ENCODE measurements at regions of chr6 and their contacts with region 1.

Region 1: DNA sequence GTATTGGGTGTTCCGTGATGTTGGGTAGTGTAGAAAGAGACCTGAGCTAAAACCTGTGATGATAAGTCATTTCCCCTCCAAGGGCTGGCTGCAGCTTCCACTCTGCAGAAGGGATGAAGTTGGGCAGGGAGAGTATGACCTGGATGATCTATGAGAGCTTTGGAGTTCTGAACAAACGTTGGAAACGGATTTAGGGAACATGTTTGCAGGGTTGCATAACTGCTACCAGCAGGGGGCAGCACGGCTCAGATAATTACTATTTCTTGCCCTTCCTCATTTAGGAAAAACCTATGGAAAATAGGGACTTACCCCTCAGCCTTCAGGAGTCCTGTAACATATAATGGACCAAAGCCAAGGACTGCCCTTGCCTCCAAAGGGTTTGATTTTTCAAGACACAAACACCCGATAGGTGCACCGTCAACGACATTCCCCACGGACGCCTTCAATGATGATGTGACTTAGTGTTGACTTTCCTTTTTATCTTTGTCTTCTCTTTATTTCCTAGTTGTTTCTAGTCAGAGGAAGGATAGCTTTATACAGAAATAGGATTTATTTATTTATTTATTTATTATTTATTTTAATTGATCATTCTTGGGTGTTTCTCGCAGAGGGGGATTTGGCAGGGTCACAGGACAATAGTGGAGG is 164.9 kb upstream of the SASH1 start:
- DNase-seq: peak; percentile 72
- H3K4me3 ChIP-seq: no peak overlapping the region
- H3K27ac ChIP-seq: no peak overlapping the region
- H3K4me1 ChIP-seq: peaks cover 5% of the 10 kb centered on the region
- H3K27me3 ChIP-seq: no peaks in the 10 kb centered on the region
- CTCF ChIP-seq: peak; percentile 70 to 82
- POLR2A ChIP-seq: no peak

Region 2: GRCh38 chr6:147382945-147383554 is 794.7 kb before region 1 on chr6:
- CTCF ChIA-PET with region 1: interaction called, 14 read pairs
- POLR2A ChIA-PET with region 1: no interaction called
- dilution Hi-C with region 1: no loop called
- intact Hi-C with region 1: no loop called
- DNase-seq: peak; percentile 44
- H3K4me3 ChIP-seq: no peak overlapping the region
- H3K27ac ChIP-seq: no peak overlapping the region
- H3K4me1 ChIP-seq: no peaks in the 10 kb centered on the region
- H3K27me3 ChIP-seq: no peaks in the 10 kb centered on the region
- CTCF ChIP-seq: peak; percentile 24 to 33
- POLR2A ChIP-seq: no peak

Region 3: GRCh38 chr6:147859071-147859470 is 318.6 kb before region 1 on chr6:
- CTCF ChIA-PET with region 1: no interaction called
- POLR2A ChIA-PET with region 1: no interaction called
- dilution Hi-C with region 1: no loop called
- intact Hi-C with region 1: no loop called
- DNase-seq: no peak
- H3K4me3 ChIP-seq: no peak overlapping the region
- H3K27ac ChIP-seq: no peak overlapping the region
- H3K4me1 ChIP-seq: no peaks in the 10 kb centered on the region
- H3K27me3 ChIP-seq: no peaks in the 10 kb centered on the region
- CTCF ChIP-seq: no peak
- POLR2A ChIP-seq: no peak

Region 4: DNA sequence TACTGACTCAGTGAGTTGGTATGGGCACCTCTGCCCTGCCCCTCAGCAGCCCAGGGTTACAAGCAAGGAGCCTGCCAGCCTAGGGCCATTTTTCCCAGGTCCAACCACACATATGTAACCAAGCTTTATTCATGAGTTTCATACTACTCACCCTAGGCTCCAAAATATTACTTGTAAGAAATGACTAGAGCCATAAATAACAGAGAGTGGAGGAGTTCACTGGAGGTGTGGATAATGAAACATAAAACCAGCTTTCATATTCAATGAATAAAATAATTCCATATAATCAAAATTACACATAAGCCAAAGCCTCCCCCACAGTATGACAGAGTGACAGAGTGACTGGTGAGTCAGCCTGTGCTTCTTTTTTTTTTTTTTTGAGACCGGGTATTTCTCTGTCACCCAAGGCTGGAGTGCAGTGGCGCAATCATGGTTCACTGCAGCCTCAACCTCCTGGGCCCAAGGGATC is 64.8 kb before region 1 on chr6:
- CTCF ChIA-PET with region 1: no interaction called
- POLR2A ChIA-PET with region 1: no interaction called
- dilution Hi-C with region 1: no loop called
- intact Hi-C with region 1: no loop called
- DNase-seq: no peak
- H3K4me3 ChIP-seq: no peak overlapping the region
- H3K27ac ChIP-seq: no peak overlapping the region
- H3K4me1 ChIP-seq: no peaks in the 10 kb centered on the region
- H3K27me3 ChIP-seq: no peaks in the 10 kb centered on the region
- CTCF ChIP-seq: no peak
- POLR2A ChIP-seq: no peak

Region 5: DNA sequence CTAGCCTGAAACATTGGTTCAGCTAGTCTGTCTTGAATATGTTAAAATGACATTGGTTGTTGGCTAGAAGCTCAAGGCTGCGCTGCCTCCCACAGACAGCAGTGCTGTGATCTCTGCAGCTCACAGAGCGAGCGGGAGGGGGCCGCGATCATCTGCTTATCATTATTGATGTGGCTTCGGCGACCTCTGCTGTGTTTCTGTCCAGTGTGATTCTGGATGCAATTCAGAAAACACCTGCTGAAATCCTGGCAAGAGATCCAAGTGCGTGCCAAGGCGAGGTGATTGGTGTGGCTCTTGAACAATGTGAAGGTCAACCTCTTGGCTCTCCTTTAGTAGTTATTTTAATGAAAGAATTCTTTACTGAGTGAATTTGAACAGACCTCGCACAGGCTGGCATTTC is 22.6 kb after region 1 on chr6:
- CTCF ChIA-PET with region 1: interaction called, 21 read pairs
- POLR2A ChIA-PET with region 1: no interaction called
- dilution Hi-C with region 1: no loop called
- intact Hi-C with region 1: no loop called
- DNase-seq: peak; percentile 12
- H3K4me3 ChIP-seq: no peak overlapping the region
- H3K27ac ChIP-seq: no peak overlapping the region
- H3K4me1 ChIP-seq: no peaks in the 10 kb centered on the region
- H3K27me3 ChIP-seq: no peaks in the 10 kb centered on the region
- CTCF ChIP-seq: no peak
- POLR2A ChIP-seq: no peak

Region 6: DNA sequence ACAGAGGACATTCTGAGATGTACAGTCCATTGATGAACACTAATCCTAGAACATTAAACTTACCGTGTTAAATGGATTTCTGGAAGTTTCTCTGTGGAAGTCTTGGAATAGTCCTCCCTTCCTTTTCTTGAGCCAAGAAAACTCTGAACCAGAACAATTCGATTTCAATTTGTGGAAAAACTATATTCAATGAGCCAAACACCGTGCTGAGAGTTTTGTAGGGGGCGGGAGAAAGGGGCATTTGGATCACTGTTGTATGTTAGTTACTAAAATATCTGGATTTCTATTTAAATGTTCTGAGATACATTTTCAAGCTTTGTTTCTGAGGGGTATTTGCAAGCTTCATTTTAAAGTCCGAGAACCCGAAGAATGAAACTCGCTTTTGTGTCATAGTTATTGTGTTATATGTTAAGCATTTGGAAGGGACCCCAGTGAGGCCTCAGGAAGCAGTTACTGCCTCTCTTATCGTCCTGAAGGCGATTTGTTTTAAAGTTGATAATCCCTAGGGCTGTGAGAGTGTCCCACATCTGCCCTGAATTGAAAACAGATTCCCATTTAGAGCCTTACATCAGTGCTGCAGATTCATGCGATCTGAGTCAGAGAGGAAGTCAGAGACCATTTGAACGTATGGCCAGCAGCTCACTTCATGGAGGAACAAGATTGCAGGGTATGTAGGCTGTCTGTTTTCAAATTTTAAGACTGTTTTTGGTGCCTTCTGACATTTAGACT is 94.2 kb after region 1 on chr6:
- CTCF ChIA-PET with region 1: interaction called, 14 read pairs
- POLR2A ChIA-PET with region 1: interaction called, 3 read pairs
- dilution Hi-C with region 1: no loop called
- intact Hi-C with region 1: loop called (anchors 5 kb)
- DNase-seq: peak; percentile 89
- H3K4me3 ChIP-seq: peak overlapping the region in 1 of 3 experiments; percentile 45
- H3K27ac ChIP-seq: peak overlapping the region; percentile 93
- H3K4me1 ChIP-seq: peaks cover 47% of the 10 kb centered on the region
- H3K27me3 ChIP-seq: no peaks in the 10 kb centered on the region
- CTCF ChIP-seq: no peak
- POLR2A ChIP-seq: peak; percentile 33

Region 7: GRCh38 chr6:148367411-148368024 is 189.8 kb after region 1 on chr6:
- CTCF ChIA-PET with region 1: interaction called, 21 read pairs
- POLR2A ChIA-PET with region 1: no interaction called
- dilution Hi-C with region 1: no loop called
- intact Hi-C with region 1: loop called (anchors 1 kb)
- DNase-seq: peak; percentile 99
- H3K4me3 ChIP-seq: no peak overlapping the region
- H3K27ac ChIP-seq: peak overlapping the region; percentile 96
- H3K4me1 ChIP-seq: peaks cover 75% of the 10 kb centered on the region
- H3K27me3 ChIP-seq: no peaks in the 10 kb centered on the region
- CTCF ChIP-seq: no peak
- POLR2A ChIP-seq: no peak

Region 8: DNA sequence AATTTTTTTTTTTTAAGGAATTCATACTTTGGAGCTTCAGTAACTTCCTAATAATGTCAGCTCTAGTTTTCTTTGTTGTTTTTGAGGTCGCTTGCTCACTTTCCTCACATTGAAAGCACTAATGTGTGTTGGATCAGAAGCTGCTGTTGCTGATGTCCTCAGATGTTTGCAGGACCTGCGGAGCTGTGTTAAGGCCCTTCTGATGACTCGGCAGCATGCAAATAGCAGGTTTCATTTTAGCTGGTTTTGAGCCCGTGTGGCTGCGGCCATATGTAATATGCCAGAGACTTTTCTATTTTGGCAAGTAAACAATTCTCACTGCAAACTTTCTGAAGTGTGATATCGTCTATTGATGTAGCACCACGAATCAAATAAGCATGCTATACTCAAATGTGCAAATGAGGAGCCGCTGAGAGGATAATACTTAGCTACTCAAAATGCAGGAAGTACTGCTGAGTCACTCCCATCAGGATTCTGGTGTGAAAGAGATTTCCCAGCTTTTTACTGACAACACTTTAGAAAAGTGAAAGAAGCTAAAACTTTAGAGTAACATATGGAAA is 352.8 kb after region 1 on chr6:
- CTCF ChIA-PET with region 1: interaction called, 12 read pairs
- POLR2A ChIA-PET with region 1: no interaction called
- dilution Hi-C with region 1: no loop called
- intact Hi-C with region 1: loop called (anchors 1 kb)
- DNase-seq: peak; percentile 87
- H3K4me3 ChIP-seq: peak overlapping the region in 2 of 3 experiments; percentile 15 to 58
- H3K27ac ChIP-seq: peak overlapping the region; percentile 92
- H3K4me1 ChIP-seq: peaks cover 20% of the 10 kb centered on the region
- H3K27me3 ChIP-seq: no peaks in the 10 kb centered on the region
- CTCF ChIP-seq: no peak
- POLR2A ChIP-seq: no peak

Region 9: DNA sequence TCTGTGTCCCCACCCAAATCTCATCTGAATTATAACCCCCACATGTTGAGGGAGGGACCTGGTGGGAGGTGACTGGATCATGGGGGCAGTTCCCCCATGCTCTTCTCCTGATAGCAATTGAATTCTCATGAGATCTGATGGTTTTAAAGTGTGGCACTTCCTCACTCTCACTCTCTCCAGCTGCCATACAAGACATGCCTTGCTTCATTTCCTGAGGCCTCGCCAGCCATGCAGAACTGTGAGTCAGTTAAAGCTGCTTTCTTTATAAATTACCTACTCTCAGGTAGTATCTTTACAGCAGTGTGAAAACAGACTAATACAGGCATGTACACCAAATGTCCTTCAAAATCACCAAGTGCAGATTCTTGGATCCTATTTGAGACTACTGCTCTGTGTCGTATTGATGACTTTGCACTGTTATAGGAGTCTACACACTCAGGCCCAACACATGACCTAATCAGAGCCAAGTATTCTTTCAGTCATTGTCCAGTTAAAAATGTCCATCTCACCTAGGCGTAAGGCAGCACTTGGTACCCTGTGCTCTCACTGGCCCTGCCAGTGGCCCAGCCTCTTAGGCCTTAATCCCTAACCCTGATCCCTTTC is 516.3 kb after region 1 on chr6:
- CTCF ChIA-PET with region 1: no interaction called
- POLR2A ChIA-PET with region 1: no interaction called
- dilution Hi-C with region 1: no loop called
- intact Hi-C with region 1: no loop called
- DNase-seq: no peak
- H3K4me3 ChIP-seq: no peak overlapping the region
- H3K27ac ChIP-seq: no peak overlapping the region
- H3K4me1 ChIP-seq: no peaks in the 10 kb centered on the region
- H3K27me3 ChIP-seq: no peaks in the 10 kb centered on the region
- CTCF ChIP-seq: no peak
- POLR2A ChIP-seq: no peak